ENCODE measurements at regions of chr12 and their contacts with region 1.

Region 1: GRCh38 chr12:61452076-61452475 is 808.1 kb upstream of the USP15 start:
- DNase-seq: peak; percentile 89
- ATAC-seq: peak; percentile 95
- H3K4me3 ChIP-seq: no peak overlapping the region
- H3K27ac ChIP-seq: peak overlapping the region; percentile 75
- H3K4me1 ChIP-seq: peaks cover 11% of the 10 kb centered on the region
- H3K27me3 ChIP-seq: no peaks in the 10 kb centered on the region
- CTCF ChIP-seq: no peak

Region 2: DNA sequence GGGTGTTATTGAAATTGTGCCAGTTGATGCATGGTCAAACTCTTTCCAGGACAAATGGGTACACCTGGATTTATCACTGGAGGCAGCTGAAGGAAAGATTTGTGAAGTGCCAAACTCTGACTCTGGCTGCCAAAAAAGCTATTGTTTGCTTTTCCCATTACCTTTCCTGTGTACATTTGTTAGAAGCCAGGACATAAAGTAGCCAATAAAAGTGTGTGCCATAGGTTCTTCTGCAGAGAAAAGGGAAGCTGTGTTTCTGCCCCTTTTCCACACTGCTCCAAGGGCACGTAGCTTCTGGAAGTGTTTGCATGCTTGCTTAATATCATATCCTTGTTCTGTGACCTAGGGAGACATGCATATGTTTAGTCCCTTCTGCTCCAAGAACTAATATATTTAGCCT is 741.8 kb before region 1 on chr12:
- CTCF ChIA-PET with region 1: no interaction called
- POLR2A ChIA-PET with region 1: no interaction called
- intact Hi-C with region 1: loop called (anchors 5 kb)
- DNase-seq: peak; percentile 50
- ATAC-seq: peak; percentile 95
- H3K4me3 ChIP-seq: no peak overlapping the region
- H3K27ac ChIP-seq: peak overlapping the region; percentile 16; the same call in 1 of the 2 replicates
- H3K4me1 ChIP-seq: peaks cover 11% of the 10 kb centered on the region
- H3K27me3 ChIP-seq: no peaks in the 10 kb centered on the region
- CTCF ChIP-seq: no peak

Region 3: DNA sequence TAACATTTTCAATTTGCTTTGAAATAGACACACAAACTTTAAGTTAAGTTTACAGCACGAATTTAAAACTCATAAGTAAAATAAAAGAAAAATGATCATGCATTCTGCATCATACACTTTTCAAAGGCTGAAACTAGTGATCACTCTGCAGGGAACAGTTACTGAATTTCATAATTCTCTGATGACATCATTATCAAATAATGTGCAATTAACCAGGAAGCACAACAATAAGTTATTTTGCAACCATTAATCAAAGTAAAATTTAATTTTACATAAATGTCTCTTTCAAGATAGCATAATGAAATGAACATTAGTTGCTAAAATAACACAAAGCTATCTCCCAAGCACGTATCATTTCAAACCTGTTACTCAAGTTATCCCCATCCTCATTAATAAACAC is 207.4 kb before region 1 on chr12:
- CTCF ChIA-PET with region 1: no interaction called
- POLR2A ChIA-PET with region 1: no interaction called
- intact Hi-C with region 1: no loop called
- DNase-seq: no peak
- ATAC-seq: no peak
- H3K4me3 ChIP-seq: no peak overlapping the region
- H3K27ac ChIP-seq: no peak overlapping the region
- H3K4me1 ChIP-seq: no peaks in the 10 kb centered on the region
- H3K27me3 ChIP-seq: no peaks in the 10 kb centered on the region
- CTCF ChIP-seq: no peak